A549 (cell line): ENCODE measurements at regions of chr10 and their contacts with region 1.

Region 1: DNA sequence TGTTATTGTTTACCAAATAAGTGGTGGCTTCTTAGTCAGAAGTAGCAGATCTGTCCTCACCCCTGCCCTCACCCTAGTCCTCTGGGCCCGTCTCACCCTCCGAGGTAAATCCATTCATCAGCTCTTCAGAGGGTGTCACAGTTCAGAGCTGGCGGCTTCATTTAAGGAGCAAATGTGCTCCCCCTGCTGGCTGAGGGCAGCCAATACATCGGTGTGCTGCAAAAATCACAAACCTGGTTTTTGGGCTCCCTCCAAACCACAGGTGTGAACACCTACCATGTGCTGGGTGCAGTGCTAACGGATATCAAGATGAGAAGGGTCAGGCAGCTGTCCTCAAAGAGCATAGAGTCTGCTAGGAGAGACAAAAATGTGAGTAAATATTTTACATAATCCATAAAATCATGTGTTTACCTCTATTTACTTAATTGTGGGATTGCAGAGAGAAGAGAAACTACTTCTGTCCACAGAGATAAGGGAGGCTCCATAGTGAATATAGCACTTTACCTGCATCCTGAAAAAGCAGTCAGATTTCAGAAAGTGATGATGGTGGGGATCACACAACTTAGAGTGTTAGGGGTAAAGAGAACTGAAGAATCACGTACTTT is 15.5 kb upstream of the CRTAC1 start:
- DNase-seq: peak; percentile 74 to 76
- ATAC-seq: peak; percentile 55 to 88; a peak in 5 of 6 replicates
- H3K4me3 ChIP-seq: no peak overlapping the region
- H3K27ac ChIP-seq: no peak overlapping the region
- H3K4me1 ChIP-seq: no peaks in the 10 kb centered on the region
- CTCF ChIP-seq: peak; percentile 82
- EP300 ChIP-seq: no peak
- POLR2A ChIP-seq: no peak
- RAD21 ChIP-seq: peak; percentile 56 to 66; a peak in 4 of 5 replicates

Region 2: DNA sequence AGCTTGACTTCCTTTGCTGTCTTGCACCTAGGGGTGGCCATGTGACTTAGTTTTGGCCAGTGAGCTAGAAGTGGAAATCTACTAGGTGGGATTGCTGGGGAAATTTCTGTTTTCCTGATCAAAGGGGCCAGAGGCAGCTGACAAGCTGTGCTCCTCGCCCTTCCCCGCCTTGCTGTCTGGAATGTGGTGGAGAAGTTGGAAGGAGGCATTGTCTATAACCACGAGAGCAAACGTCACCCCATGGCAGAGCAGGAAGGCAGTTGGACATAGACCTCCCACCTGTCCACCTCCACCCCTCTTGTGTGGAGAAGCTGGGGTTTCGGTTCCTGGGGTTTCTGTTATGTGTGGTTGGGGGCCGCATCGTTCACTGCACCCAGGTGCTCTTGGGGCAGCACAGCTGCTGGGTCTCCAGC is 281.4 kb before region 1 on chr10:
- CTCF ChIA-PET with region 1: interaction called, 50 read pairs
- POLR2A ChIA-PET with region 1: no interaction called
- DNase-seq: no peak
- ATAC-seq: no peak
- H3K4me3 ChIP-seq: no peak overlapping the region
- H3K27ac ChIP-seq: no peak overlapping the region
- H3K4me1 ChIP-seq: no peaks in the 10 kb centered on the region
- CTCF ChIP-seq: no peak
- EP300 ChIP-seq: no peak
- POLR2A ChIP-seq: no peak
- RAD21 ChIP-seq: no peak

Region 3: DNA sequence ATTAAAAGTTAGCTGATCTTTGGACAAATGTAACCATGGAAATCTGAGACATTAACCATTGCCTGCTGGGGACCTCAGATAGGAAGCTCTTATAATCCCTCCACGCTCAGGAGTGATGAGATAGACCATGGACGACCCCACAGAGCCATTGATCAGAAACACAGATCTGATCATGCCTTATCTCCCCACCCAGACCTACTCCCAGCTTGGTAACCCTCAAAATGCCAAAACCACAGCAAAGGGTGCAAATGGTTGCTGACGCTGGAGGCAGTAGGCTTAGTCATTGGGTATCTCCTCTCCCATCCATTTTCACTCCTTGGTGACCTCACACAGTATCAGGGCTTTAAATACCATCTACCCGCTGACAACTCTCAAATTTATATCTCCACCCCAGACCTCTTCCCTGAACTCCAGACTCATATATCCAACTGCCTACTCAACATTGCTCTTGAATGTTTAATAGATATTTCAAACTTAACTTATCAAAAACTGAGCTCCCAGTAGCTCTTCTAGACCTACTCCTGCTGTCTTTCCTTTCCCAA is 76.3 kb before region 1 on chr10:
- CTCF ChIA-PET with region 1: interaction called, 13 read pairs
- POLR2A ChIA-PET with region 1: no interaction called
- DNase-seq: no peak
- ATAC-seq: no peak
- H3K4me3 ChIP-seq: no peak overlapping the region
- H3K27ac ChIP-seq: no peak overlapping the region
- H3K4me1 ChIP-seq: no peaks in the 10 kb centered on the region
- CTCF ChIP-seq: no peak
- EP300 ChIP-seq: no peak
- POLR2A ChIP-seq: no peak
- RAD21 ChIP-seq: no peak

Region 4: GRCh38 chr10:98013122-98013521 is 32.8 kb before region 1 on chr10:
- CTCF ChIA-PET with region 1: interaction called, 24 read pairs
- POLR2A ChIA-PET with region 1: no interaction called
- DNase-seq: no peak
- ATAC-seq: no peak
- H3K4me3 ChIP-seq: no peak overlapping the region
- H3K27ac ChIP-seq: no peak overlapping the region
- H3K4me1 ChIP-seq: no peaks in the 10 kb centered on the region
- CTCF ChIP-seq: no peak
- EP300 ChIP-seq: no peak
- POLR2A ChIP-seq: no peak
- RAD21 ChIP-seq: no peak

Region 5: DNA sequence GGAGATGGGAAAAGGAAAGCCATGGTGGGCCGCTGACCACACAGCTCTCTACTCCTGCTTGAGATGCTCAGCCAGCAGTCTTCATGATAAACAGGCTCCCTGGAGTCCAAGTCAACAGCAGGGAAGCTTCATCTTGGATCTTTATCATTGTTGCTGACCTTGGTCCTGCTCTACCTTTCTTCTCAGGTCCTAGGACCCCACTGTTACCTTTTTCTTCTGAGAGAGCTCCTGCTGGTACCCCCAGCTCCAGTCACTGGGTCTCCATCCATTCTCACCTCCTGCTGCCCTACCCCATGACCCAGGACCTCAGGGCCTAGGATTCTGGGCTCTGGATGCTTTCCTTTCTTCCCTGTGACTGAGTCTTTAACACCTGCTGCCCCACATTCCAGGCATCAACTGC is 10.3 kb before region 1 on chr10:
- CTCF ChIA-PET with region 1: interaction called, 77 read pairs
- POLR2A ChIA-PET with region 1: no interaction called
- DNase-seq: no peak
- ATAC-seq: no peak
- H3K4me3 ChIP-seq: no peak overlapping the region
- H3K27ac ChIP-seq: no peak overlapping the region
- H3K4me1 ChIP-seq: 0 out of 3 replicates have a peak, but pooled peaks cover 4% of the 10 kb centered on the region
- CTCF ChIP-seq: no peak
- EP300 ChIP-seq: no peak
- POLR2A ChIP-seq: no peak
- RAD21 ChIP-seq: no peak